Activated B cell treated with CpG ODN at 0.5 μM for 24 hours (primary cell): ENCODE measurements at regions of chr1 and their contacts with region 1.

Region 1: GRCh38 chr1:206784471-206784903 is 12.2 kb upstream of the IL10 start:
- DNase-seq: no peak
- ATAC-seq: peak; percentile 58
- H3K4me3 Mint-ChIP-seq: peak overlapping the region; percentile 77
- H3K27ac Mint-ChIP-seq: peak overlapping the region; percentile 88
- H3K4me1 Mint-ChIP-seq: peaks cover 52% of the 10 kb centered on the region
- H3K27me3 Mint-ChIP-seq: no peaks in the 10 kb centered on the region
- CTCF ChIP-seq: no peak

Region 2: DNA sequence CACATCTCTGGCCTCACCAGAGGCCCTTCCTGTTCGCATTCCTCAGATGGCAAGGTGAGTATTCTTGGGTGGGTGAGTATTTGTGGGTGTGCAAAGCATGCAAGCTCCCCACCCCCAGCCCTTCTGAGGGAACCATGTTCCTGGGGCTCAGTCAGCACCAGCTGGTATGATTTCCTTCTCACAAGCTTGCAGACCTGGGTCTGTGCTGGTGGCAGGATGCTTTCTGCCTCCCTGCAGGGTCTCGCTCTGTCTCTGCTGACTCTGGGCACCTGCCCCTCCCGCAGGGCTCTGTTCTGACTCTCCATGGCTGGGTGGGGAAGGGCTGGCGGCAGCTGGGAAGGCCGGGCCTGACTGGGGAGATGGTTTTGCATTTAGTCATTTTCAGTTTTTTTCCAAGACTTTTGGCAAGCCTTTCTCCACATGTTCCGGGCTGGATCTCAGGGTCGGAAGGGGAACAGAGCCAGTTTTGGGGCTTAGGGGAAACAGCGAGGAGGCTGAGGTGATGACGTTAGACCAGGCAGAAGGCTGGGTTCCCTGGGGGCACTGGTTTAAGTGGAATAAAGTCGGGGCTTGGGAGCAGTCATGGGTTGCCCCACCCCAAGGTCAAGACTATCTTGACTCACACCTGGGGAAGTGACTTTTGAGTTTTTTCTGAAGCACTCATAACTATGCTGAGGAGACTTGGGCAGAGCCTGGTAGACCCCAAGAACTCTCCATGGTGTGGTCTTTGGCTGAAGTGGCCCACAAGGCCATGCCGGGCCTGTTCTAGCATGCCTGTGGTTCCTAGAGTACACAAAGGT is 271.0 kb before region 1 on chr1:
- CTCF ChIA-PET with region 1: no interaction called
- POLR2A ChIA-PET with region 1: no interaction called
- intact Hi-C with region 1: no loop called
- DNase-seq: no peak
- ATAC-seq: no peak
- H3K4me3 Mint-ChIP-seq: no peak overlapping the region
- H3K27ac Mint-ChIP-seq: no peak overlapping the region
- H3K4me1 Mint-ChIP-seq: peaks cover 14% of the 10 kb centered on the region
- H3K27me3 Mint-ChIP-seq: peaks cover 15% of the 10 kb centered on the region
- CTCF ChIP-seq: no peak

Region 3: DNA sequence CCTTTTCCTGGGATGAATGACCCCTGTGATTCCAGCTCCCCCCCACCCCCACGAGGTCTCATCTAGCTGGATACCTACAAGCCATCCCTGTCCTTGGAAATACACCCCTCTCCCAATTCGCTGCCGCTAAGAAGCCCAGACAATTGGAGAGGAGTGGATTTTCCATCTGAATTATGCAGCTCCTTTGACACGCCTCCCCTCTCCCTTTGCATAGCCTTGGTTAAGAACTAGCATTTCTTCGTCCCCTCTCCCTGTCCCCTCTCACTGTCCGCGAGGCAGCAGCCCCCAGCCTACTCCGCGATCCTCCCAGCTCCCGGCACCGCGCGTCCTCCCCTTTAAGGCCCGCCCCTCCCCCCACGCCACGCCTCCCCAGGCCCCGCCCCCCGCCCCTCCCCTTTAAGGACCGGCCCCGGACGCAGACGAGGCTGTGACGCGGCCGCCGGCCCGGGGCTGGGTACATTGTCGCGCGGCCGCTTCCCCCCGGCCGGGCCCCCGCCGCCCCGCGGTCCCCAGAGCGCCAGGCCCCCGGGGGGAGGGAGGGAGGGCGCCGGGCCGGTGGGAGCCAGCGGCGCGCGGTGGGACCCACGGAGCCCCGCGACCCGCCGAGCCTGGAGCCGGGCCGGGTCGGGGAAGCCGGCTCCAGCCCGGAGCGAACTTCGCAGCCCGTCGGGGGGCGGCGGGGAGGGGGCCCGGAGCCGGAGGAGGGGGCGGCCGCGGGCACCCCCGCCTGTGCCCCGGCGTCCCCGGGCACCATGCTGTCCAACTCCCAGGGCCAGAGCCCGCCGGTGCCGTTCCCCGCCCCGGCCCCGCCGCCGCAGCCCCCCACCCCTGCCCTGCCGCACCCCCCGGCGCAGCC is 99.8 kb before region 1 on chr1 and contains the start of gene MAPKAPK2:
- CTCF ChIA-PET with region 1: no interaction called
- POLR2A ChIA-PET with region 1: interaction called, 3 read pairs
- intact Hi-C with region 1: loop called (anchors 2 kb)
- DNase-seq: peak; percentile 72
- ATAC-seq: peak; percentile 65
- H3K4me3 Mint-ChIP-seq: peak within 1 kb of the TSS; percentile 94
- H3K27ac Mint-ChIP-seq: peak within 1 kb of the TSS; percentile 90
- H3K4me1 Mint-ChIP-seq: peaks cover 80% of the 10 kb centered on the region
- H3K27me3 Mint-ChIP-seq: no peaks in the 10 kb centered on the region
- CTCF ChIP-seq: no peak
- total RNA-seq, gene MAPKAPK2: 71.2 and 72.1 TPM in 2 replicates

Region 4: GRCh38 chr1:206766251-206766856 is 18.1 kb before region 1 on chr1:
- CTCF ChIA-PET with region 1: interaction called, 6 read pairs
- POLR2A ChIA-PET with region 1: interaction called, 67 read pairs
- intact Hi-C with region 1: loop called (anchors 1 kb)
- DNase-seq: no peak
- ATAC-seq: peak; percentile 64
- H3K4me3 Mint-ChIP-seq: peak overlapping the region; percentile 42
- H3K27ac Mint-ChIP-seq: peak overlapping the region; percentile 73
- H3K4me1 Mint-ChIP-seq: peaks cover 51% of the 10 kb centered on the region
- H3K27me3 Mint-ChIP-seq: no peaks in the 10 kb centered on the region
- CTCF ChIP-seq: no peak

Region 5: GRCh38 chr1:206774093-206774492 is 10.4 kb before region 1 on chr1:
- CTCF ChIA-PET with region 1: interaction called, 6 read pairs
- POLR2A ChIA-PET with region 1: interaction called, 67 read pairs
- intact Hi-C with region 1: loop called (anchors 1 kb)
- DNase-seq: no peak
- ATAC-seq: peak; percentile 22
- H3K4me3 Mint-ChIP-seq: no peak overlapping the region
- H3K27ac Mint-ChIP-seq: no peak overlapping the region
- H3K4me1 Mint-ChIP-seq: peaks cover 70% of the 10 kb centered on the region
- H3K27me3 Mint-ChIP-seq: no peaks in the 10 kb centered on the region
- CTCF ChIP-seq: no peak

Region 6: GRCh38 chr1:206797534-206798383 is 13.3 kb after region 1 on chr1:
- CTCF ChIA-PET with region 1: interaction called, 4 read pairs
- POLR2A ChIA-PET with region 1: interaction called, 10 read pairs
- intact Hi-C with region 1: loop called (anchors 1 kb)
- DNase-seq: no peak
- ATAC-seq: peak; percentile 25
- H3K4me3 Mint-ChIP-seq: no peak overlapping the region
- H3K27ac Mint-ChIP-seq: no peak overlapping the region
- H3K4me1 Mint-ChIP-seq: peaks cover 73% of the 10 kb centered on the region
- H3K27me3 Mint-ChIP-seq: no peaks in the 10 kb centered on the region
- CTCF ChIP-seq: no peak

Region 7: DNA sequence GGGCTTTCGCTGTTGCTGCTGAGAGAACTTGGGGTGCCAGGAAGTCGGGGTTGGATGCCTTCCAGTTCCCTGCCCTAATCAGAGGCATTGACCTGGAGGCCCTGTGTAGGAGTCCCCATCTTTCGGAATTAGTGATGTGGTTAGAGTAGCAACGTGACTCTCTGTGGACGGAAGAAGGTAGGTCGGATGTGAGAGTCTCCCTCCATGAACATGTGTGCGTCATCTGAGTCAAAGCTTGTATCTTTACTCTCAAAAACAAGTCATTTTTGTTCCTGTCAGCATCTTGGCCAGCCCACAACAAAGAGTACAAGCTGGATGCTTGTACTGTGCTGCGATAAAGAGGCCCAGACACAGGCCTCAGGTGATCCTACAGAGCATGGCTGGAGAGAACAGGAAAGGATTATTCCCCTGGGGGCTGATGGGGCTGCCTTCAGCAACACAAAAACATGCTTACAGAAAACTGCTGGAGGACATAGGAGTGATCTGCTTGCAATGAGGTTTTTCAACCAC is 18.8 kb after region 1 on chr1:
- CTCF ChIA-PET with region 1: interaction called, 4 read pairs
- POLR2A ChIA-PET with region 1: interaction called, 10 read pairs
- intact Hi-C with region 1: loop called (anchors 1 kb)
- DNase-seq: no peak
- ATAC-seq: peak; percentile 91
- H3K4me3 Mint-ChIP-seq: peak overlapping the region; percentile 8
- H3K27ac Mint-ChIP-seq: peak overlapping the region; percentile 74
- H3K4me1 Mint-ChIP-seq: peaks cover 39% of the 10 kb centered on the region
- H3K27me3 Mint-ChIP-seq: no peaks in the 10 kb centered on the region
- CTCF ChIP-seq: no peak

Region 8: DNA sequence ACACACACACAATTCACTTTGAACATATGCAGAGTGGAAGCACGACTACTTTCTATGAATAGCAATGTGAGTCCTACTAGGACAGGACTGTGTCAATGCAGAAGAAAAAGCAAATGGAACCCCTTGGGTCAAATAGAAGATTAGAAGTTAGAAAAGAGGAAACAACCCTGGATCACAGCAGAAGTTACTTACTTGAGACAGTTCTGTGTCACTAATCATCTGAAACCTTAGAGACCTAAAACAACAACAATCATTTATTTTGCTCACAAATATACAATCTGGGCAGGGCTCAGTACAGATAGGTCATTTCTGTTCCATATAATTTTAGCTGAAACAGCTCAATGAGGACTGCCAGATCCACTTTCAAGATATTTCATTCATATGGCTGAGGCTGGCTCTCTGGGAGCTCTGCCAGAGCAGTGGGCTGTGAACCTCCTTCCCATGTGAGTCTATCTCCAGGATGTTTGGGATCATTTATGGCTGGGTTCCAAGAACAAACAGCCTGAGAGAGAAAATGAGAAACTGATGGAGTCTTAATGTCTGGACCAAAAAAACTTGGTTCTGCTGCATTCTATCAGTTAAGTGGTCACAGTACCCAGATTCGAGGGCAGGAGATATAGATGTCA is 30.3 kb after region 1 on chr1:
- CTCF ChIA-PET with region 1: no interaction called
- POLR2A ChIA-PET with region 1: interaction called, 3 read pairs
- intact Hi-C with region 1: loop called (anchors 5 kb)
- DNase-seq: no peak
- ATAC-seq: peak; percentile 69
- H3K4me3 Mint-ChIP-seq: peak overlapping the region; percentile 44
- H3K27ac Mint-ChIP-seq: peak overlapping the region; percentile 73
- H3K4me1 Mint-ChIP-seq: peaks cover 47% of the 10 kb centered on the region
- H3K27me3 Mint-ChIP-seq: no peaks in the 10 kb centered on the region
- CTCF ChIP-seq: no peak

Region 9: GRCh38 chr1:208409176-208409575 is 1624.7 kb after region 1 on chr1:
- CTCF ChIA-PET with region 1: no interaction called
- POLR2A ChIA-PET with region 1: no interaction called
- intact Hi-C with region 1: no loop called
- DNase-seq: no peak
- ATAC-seq: no peak
- H3K4me3 Mint-ChIP-seq: no peak overlapping the region
- H3K27ac Mint-ChIP-seq: no peak overlapping the region
- H3K4me1 Mint-ChIP-seq: no peaks in the 10 kb centered on the region
- H3K27me3 Mint-ChIP-seq: peaks cover 2% of the 10 kb centered on the region
- CTCF ChIP-seq: no peak